ENCODE measurements at regions of chr2 and their contacts with region 1.

Region 1: DNA sequence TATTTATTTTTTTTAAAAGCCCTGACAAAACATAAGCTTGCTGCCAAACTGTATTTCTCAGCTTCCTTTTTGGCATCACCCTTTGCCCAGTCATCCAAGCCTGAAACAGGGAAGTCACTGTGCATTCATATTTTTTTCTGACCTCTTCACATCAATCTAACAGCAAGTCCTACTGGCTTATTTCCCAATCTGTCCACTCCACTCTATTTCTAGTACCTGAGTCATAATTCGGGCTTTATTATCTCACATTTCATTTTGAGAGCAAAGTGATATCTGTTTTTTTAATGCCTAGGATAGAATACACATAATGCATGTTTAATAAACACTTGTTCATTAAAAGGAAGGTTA is 5.1 kb downstream of the HNMT start:
- DNase-seq: peak; percentile 87 to 94 (median 92)
- H3K4me3 ChIP-seq: peak overlapping the region; percentile 7 to 94 (median 26)
- H3K4me3 Mint-ChIP-seq: peak overlapping the region; percentile 35 to 77
- H3K27ac ChIP-seq: peak overlapping the region; percentile 64 to 94
- H3K27ac Mint-ChIP-seq: peak overlapping the region; percentile 94 to 99 (median 97)
- H3K4me1 ChIP-seq: peaks cover 42 to 56% of the 10 kb centered on the region in 2 donors
- H3K4me1 Mint-ChIP-seq: peaks cover 52% of the 10 kb centered on the region
- H3K27me3 ChIP-seq: no peaks in the 10 kb centered on the region
- H3K27me3 Mint-ChIP-seq: peaks cover 0 to 4% (median 2%) of the 10 kb centered on the region in 3 donors
- CTCF ChIP-seq: no peak

Region 2: GRCh38 chr2:137797641-137798040 is 171.8 kb before region 1 on chr2:
- intact Hi-C with region 1: no loop called
- DNase-seq: no peak
- H3K4me3 ChIP-seq: no peak overlapping the region
- H3K4me3 Mint-ChIP-seq: no peak overlapping the region
- H3K27ac ChIP-seq: no peak overlapping the region
- H3K27ac Mint-ChIP-seq: no peak overlapping the region
- H3K4me1 ChIP-seq: no peaks in the 10 kb centered on the region
- H3K4me1 Mint-ChIP-seq: no peaks in the 10 kb centered on the region
- H3K27me3 ChIP-seq: no peaks in the 10 kb centered on the region
- H3K27me3 Mint-ChIP-seq: no peaks in the 10 kb centered on the region
- CTCF ChIP-seq: no peak

Region 3: GRCh38 chr2:138003411-138003810 is 34.0 kb after region 1 on chr2:
- intact Hi-C with region 1: no loop called
- DNase-seq: no peak
- H3K4me3 ChIP-seq: no peak overlapping the region
- H3K4me3 Mint-ChIP-seq: no peak overlapping the region
- H3K27ac ChIP-seq: no peak overlapping the region
- H3K27ac Mint-ChIP-seq: peak overlapping the region in 1 of 7 donors; percentile 15
- H3K4me1 ChIP-seq: no peaks in the 10 kb centered on the region
- H3K4me1 Mint-ChIP-seq: no peaks in the 10 kb centered on the region
- H3K27me3 ChIP-seq: no peaks in the 10 kb centered on the region
- H3K27me3 Mint-ChIP-seq: no peaks in the 10 kb centered on the region
- CTCF ChIP-seq: no peak

Region 4: DNA sequence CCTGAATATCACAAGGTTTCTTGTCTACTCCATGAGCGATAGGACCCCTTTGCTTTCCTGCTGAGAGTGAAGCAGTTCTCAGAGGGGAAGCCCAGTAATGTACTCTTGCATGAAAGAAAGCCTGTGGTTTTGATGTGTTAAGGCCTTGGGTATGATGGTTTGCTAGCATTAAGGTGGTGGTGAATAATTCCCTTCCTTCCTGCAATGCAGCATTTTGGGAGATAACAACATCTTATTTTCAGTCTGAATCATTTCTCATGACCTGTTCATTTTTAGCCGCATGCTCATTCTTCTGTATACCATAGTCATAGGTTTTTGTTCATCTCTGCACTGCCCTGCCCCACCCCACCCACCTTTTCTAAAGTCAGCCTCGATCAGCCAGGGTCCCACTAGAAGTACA is 61.1 kb after region 1 on chr2:
- intact Hi-C with region 1: loop called in 1 of 2 experiments (anchors 5 kb)
- DNase-seq: no peak
- H3K4me3 ChIP-seq: no peak overlapping the region
- H3K4me3 Mint-ChIP-seq: no peak overlapping the region
- H3K27ac ChIP-seq: no peak overlapping the region
- H3K27ac Mint-ChIP-seq: no peak overlapping the region
- H3K4me1 ChIP-seq: peaks cover 40 to 43% of the 10 kb centered on the region in 2 donors
- H3K4me1 Mint-ChIP-seq: peaks cover 5% of the 10 kb centered on the region
- H3K27me3 ChIP-seq: no peaks in the 10 kb centered on the region
- H3K27me3 Mint-ChIP-seq: no peaks in the 10 kb centered on the region
- CTCF ChIP-seq: no peak

Region 5: GRCh38 chr2:138501425-138502283 is 532.3 kb after region 1 on chr2 and contains the start of gene SPOPL:
- intact Hi-C with region 1: loop called (anchors 5 to 10 kb)
- DNase-seq: peak; percentile 76 to 90 (median 89)
- H3K4me3 ChIP-seq: peak within 1 kb of the TSS; percentile 94 to 98 (median 95)
- H3K4me3 Mint-ChIP-seq: peak within 1 kb of the TSS; percentile 100
- H3K27ac ChIP-seq: peak within 1 kb of the TSS; percentile 89 to 92
- H3K27ac Mint-ChIP-seq: peak within 1 kb of the TSS; percentile 94 to 100 (median 98)
- H3K4me1 ChIP-seq: peaks cover 55 to 70% of the 10 kb centered on the region in 2 donors
- H3K4me1 Mint-ChIP-seq: peaks cover 56% of the 10 kb centered on the region
- H3K27me3 ChIP-seq: no peaks in the 10 kb centered on the region
- H3K27me3 Mint-ChIP-seq: peaks cover 0 to 2% (median 0%) of the 10 kb centered on the region in 3 donors
- CTCF ChIP-seq: peak; percentile 31
- polyA plus RNA-seq, gene SPOPL: 13.1 to 22.4 (median 18.1) TPM